Colonic mucosa (tissue), 4 donors: ENCODE measurements at regions of chr3 and their contacts with region 1.

Region 1: GRCh38 chr3:180926526-180926925 is 14.1 kb downstream of the FXR1 start:
- DNase-seq: no peak
- H3K4me3 ChIP-seq: no peak overlapping the region
- H3K27ac ChIP-seq: no peak overlapping the region
- H3K4me1 ChIP-seq: no peaks in the 10 kb centered on the region
- H3K27me3 ChIP-seq: no peaks in the 10 kb centered on the region
- CTCF ChIP-seq: no peak

Region 2: GRCh38 chr3:180661444-180661843 is 265.1 kb before region 1 on chr3:
- intact Hi-C with region 1: no loop called
- DNase-seq: no peak
- H3K4me3 ChIP-seq: no peak overlapping the region
- H3K27ac ChIP-seq: no peak overlapping the region
- H3K4me1 ChIP-seq: no peaks in the 10 kb centered on the region
- H3K27me3 ChIP-seq: no peaks in the 10 kb centered on the region
- CTCF ChIP-seq: no peak

Region 3: DNA sequence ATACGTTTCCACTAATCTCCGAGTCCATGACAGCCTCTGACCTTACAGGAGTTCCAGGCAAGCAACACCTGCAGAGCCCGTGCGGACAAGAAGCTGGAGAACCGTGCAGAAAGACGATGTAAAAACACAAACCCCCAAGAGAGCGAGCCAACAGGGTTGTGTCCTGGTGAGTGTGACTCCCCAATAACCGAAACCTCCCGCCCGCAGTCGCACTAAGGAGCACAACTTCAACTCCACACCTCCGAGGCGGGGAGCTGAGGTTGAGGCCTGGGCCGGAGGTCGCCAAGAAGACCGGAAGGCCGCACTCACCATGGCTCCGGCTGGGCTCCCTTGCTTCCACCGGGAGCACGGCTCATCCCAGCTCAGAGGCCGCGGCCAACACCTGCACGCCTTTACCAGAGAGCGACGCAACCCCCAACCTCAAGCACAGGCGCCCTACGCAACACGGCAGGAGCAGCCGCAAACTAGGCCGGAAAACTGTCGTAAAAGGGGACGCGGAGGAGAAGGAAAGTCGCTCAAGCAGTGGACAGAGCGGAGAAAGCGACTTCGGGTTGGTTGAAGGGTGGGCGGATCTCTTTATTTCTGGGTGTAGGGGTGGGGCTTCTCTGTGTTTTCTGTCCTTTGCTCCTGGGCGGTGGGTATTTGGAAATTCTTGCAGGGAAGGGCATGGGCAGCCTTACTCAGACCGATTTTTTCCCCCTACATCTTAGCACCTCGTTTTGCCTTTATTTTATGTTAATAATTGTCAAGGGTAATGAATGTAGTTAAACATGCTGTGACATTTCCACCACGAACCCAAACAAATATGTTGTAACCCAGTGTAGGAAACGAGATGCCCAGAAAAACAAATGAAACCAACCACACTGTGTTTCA is 63.0 kb after region 1 on chr3 and contains the start of gene DNAJC19:
- intact Hi-C with region 1: loop called (anchors 10 kb)
- DNase-seq: peak; percentile 97
- H3K4me3 ChIP-seq: peak within 1 kb of the TSS; percentile 64
- H3K27ac ChIP-seq: peak within 1 kb of the TSS; percentile 77
- H3K4me1 ChIP-seq: no peaks in the 10 kb centered on the region
- H3K27me3 ChIP-seq: no peaks in the 10 kb centered on the region
- CTCF ChIP-seq: no peak
- total RNA-seq, gene DNAJC19: 38.0 to 46.7 TPM